Mammary epithelial cell (primary cell): ENCODE measurements at regions of chr10 and their contacts with region 1.

Region 1: GRCh38 chr10:99370993-99371392 is 41.8 kb downstream of the CNNM1 start:
- DNase-seq: peak; percentile 25
- H3K4me3 ChIP-seq: no peak overlapping the region
- H3K27ac ChIP-seq: no peak overlapping the region
- H3K4me1 ChIP-seq: no peaks in the 10 kb centered on the region
- H3K27me3 ChIP-seq: no peaks in the 10 kb centered on the region
- CTCF ChIP-seq: peak; percentile 46 to 64

Region 2: GRCh38 chr10:98748298-98748697 is 622.7 kb before region 1 on chr10:
- CTCF ChIA-PET with region 1: no interaction called
- dilution Hi-C with region 1: no loop called
- in situ Hi-C with region 1: no loop called
- intact Hi-C with region 1: loop called (anchors 5 kb)
- DNase-seq: peak; percentile 23
- H3K4me3 ChIP-seq: no peak overlapping the region
- H3K27ac ChIP-seq: no peak overlapping the region
- H3K4me1 ChIP-seq: no peaks in the 10 kb centered on the region
- H3K27me3 ChIP-seq: peaks cover 2% of the 10 kb centered on the region
- CTCF ChIP-seq: peak; percentile 31 to 63

Region 3: DNA sequence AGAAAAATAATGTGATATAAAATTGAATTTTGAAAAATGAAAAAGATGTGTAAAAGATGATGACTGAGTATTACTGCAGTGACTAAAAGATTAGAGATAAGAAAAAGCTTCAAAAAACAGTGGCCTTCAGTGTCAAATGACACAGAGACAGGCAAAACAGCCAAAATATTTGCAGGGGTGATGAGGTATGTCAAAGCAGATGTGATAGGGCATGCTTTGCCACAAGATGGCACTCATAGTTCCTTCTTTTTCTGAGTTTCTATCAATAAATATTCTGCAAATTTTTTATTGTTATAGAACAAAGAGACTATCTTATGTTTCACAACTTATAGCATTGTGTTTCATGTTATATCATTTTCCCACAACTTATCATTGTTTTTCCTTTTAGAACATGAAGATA is 580.2 kb before region 1 on chr10:
- CTCF ChIA-PET with region 1: no interaction called
- dilution Hi-C with region 1: no loop called
- in situ Hi-C with region 1: loop called in 1 of 2 experiments (anchors 25 kb)
- intact Hi-C with region 1: loop called (anchors 5 kb)
- DNase-seq: no peak
- H3K4me3 ChIP-seq: no peak overlapping the region
- H3K27ac ChIP-seq: no peak overlapping the region
- H3K4me1 ChIP-seq: no peaks in the 10 kb centered on the region
- H3K27me3 ChIP-seq: no peaks in the 10 kb centered on the region
- CTCF ChIP-seq: peak; percentile 44 to 57

Region 4: DNA sequence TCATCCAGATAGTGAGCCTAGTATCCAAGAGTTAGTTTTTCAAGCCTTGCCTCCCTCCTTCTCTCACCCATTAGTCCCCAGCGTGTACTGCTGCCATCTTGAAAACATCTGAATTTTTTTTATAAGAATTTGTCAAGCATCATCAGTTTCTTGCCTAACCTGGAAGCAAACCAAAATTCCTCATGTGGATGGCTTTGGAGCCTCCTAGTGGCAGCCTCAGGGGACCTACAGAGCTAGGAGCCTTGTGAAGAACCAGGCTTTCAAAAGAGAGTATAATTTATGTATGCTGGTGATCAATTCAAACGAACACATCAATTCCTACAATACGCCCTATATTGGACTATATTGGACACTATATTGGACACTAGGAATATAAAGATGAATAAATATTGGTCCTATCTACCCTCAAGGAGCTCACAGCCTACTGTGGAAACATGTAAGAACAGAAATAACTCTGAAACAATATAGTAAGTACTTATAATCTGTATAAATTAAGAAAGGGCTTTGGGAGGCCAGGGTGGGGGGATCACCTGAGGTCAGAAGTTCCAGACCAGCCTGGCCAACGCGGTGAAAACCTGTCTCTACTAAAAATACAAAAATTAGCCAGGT is 198.8 kb before region 1 on chr10:
- CTCF ChIA-PET with region 1: no interaction called
- dilution Hi-C with region 1: no loop called
- in situ Hi-C with region 1: no loop called
- intact Hi-C with region 1: loop called (anchors 10 kb)
- DNase-seq: peak; percentile 29
- H3K4me3 ChIP-seq: no peak overlapping the region
- H3K27ac ChIP-seq: no peak overlapping the region
- H3K4me1 ChIP-seq: no peaks in the 10 kb centered on the region
- H3K27me3 ChIP-seq: no peaks in the 10 kb centered on the region
- CTCF ChIP-seq: peak; percentile 69 to 91

Region 5: GRCh38 chr10:99248824-99249223 is 122.2 kb before region 1 on chr10:
- CTCF ChIA-PET with region 1: no interaction called
- dilution Hi-C with region 1: no loop called
- in situ Hi-C with region 1: no loop called
- intact Hi-C with region 1: loop called (anchors 2 kb)
- DNase-seq: no peak
- H3K4me3 ChIP-seq: no peak overlapping the region
- H3K27ac ChIP-seq: no peak overlapping the region
- H3K4me1 ChIP-seq: no peaks in the 10 kb centered on the region
- H3K27me3 ChIP-seq: no peaks in the 10 kb centered on the region
- CTCF ChIP-seq: no peak

Region 6: DNA sequence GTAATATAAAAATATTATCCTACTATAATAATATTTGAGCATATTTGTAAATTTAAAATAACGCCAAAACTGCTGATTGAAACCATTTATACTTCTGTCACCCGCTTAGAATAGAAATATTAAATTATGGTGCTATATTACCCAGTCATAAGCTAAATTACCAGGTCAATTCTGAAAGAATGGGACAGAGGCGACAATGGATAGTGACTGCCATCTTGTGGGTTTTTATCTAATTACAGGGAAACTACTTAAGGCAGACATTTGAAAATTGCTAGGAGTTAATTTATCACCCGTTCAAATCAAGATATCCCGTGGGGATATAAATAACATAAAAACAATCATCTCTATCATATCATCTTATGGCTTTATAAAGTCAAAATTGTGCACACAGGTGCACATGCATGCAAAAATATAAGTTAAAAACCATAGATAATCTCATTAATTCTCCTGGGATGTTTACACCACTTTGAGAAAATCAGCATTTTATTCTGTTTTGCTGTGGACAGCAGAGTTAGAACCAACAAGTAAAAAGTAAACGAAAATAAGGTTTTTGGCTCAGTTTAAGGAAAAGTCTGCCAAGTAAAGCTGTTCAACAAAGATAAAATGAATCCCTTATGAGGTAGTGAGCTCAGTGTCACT is 94.0 kb before region 1 on chr10:
- CTCF ChIA-PET with region 1: no interaction called
- dilution Hi-C with region 1: no loop called
- in situ Hi-C with region 1: no loop called
- intact Hi-C with region 1: loop called (anchors 5 kb)
- DNase-seq: no peak
- H3K4me3 ChIP-seq: no peak overlapping the region
- H3K27ac ChIP-seq: no peak overlapping the region
- H3K4me1 ChIP-seq: peaks cover 4% of the 10 kb centered on the region
- H3K27me3 ChIP-seq: no peaks in the 10 kb centered on the region
- CTCF ChIP-seq: peak; percentile 42 to 48

Region 7: GRCh38 chr10:99430116-99430450 is 59.1 kb after region 1 on chr10:
- CTCF ChIA-PET with region 1: no interaction called
- dilution Hi-C with region 1: no loop called
- in situ Hi-C with region 1: no loop called
- intact Hi-C with region 1: no loop called
- DNase-seq: no peak
- H3K4me3 ChIP-seq: peak overlapping the region; percentile 82 to 97 (median 90)
- H3K27ac ChIP-seq: peak overlapping the region; percentile 84
- H3K4me1 ChIP-seq: peaks cover 10% of the 10 kb centered on the region
- H3K27me3 ChIP-seq: no peaks in the 10 kb centered on the region
- CTCF ChIP-seq: no peak